ENCODE measurements at regions of chr15 and their contacts with region 1.

Region 1: DNA sequence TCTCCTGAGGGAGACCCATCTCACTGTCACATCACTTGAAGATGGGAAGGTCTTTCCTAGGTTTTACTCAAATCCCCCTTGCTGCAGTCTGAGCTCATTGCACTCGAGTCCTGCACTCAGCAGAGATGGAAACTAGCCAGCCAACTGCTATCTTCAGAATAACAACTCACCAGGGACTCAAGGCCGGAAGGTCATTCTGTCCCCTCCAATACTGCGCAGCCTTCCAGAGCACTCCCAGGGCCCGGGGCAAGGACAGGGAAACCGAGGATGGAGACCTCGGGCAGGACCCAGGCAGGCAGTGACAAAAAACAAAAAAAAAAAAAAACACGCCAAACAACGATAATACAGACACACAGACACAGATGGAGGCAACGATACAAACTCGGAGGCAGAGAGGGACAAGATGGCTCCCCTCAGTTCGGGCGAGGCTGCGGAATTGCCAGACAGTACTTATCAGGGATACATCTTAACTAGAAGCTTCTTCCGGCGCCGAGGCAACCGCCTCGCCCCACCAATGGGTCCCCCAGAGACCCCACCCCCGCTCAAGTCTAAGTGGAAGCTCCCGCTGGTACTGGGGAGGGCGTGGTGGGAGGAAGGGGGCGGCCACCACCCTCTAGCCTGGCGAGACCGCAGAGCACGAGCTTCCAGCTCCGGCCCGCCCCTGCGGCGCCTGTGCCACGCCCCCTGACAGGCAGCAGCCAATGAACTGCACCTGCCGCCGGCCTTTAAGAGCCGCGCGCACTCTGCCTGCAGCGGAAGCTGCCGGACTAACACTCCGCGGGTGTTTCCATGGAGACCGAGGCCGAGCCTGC is 7.0 kb upstream of the MAP1A start:
- DNase-seq: peak; percentile 96
- H3K4me3 ChIP-seq: peak overlapping the region; percentile 73
- H3K27ac ChIP-seq: peak overlapping the region; percentile 81
- H3K27me3 ChIP-seq: no peaks in the 10 kb centered on the region
- CTCF ChIP-seq: peak; percentile 45

Region 2: DNA sequence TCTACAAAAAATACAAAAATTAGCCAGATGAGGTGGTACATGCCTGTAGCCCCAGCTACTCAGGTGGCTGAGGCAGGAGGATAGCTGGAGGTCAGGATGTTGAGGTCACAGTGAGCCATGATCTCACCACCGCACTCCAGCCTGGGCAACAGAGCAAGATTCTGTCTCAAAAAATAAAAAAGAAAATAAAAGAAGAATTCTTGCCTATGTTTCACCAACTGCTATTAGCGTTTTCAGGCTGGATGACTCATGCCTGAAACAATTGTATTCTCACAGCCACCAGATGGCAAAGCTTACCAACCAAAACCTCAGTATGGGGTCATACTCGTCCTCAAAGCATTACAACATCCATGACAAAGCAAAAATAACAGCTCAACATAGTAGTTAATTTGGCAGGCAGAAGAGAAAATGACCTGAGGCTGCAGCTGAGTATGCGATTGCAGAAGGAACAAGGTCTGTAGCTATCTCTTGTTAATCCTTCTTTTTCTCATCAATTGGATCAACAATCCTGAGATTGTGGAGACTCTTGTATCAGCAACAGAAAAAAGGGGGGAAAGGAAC is 69.6 kb before region 1 on chr15:
- CTCF ChIA-PET with region 1: interaction called, 39 read pairs
- POLR2A ChIA-PET with region 1: interaction called, 14 read pairs
- DNase-seq: peak; percentile 93
- H3K4me3 ChIP-seq: no peak overlapping the region
- H3K27ac ChIP-seq: peak overlapping the region; percentile 62
- H3K27me3 ChIP-seq: no peaks in the 10 kb centered on the region
- CTCF ChIP-seq: peak; percentile 58

Region 3: DNA sequence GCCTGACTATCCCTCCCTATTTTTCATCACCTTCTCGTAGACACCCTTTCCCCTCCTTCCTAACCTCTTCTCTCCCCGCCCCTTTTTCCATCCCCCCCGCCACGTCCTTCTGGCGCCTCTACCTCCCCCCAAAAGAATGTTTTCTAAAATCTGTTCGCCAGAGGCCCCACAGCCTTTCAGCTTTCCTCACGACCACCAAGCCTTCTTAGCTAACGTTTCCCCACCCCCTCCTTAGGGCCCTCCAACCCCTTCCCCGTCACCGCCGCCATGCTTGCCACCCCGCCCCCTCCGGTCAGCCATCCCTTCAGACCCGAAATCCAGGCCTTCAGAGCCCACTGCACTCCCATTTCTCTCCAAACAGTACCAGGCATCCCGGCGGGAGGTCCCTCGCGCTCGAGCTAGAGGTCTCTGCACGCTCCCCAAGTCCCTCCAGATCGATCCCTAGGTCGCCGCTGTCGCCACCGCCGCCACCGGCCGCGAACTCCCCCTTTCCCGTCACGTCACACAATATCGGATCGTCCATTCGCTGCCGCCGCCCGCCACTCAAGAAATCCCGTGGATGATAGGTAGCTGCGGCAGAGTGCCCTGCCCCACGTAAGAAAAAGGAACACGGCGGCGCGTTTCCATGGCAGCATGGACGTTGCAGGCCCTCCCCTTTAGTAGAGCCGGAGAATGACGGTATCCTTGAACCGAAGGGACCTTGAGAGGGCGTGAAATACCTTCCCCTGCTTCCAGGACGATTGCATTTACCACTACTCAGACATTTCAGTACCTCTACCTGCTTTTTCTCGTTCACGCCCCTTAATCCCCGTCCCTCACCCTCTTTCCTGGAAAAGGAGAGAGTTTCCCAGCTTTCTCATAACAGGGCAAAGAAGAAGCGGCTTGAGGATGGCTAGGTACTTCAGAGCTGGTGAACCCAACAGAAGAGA is 17.5 kb before region 1 on chr15 and contains the start of gene TP53BP1:
- CTCF ChIA-PET with region 1: interaction called, 11 read pairs
- POLR2A ChIA-PET with region 1: interaction called, 17 read pairs
- DNase-seq: peak; percentile 79
- H3K4me3 ChIP-seq: peak within 1 kb of the TSS; percentile 95
- H3K27ac ChIP-seq: peak within 1 kb of the TSS; percentile 70
- H3K27me3 ChIP-seq: no peaks in the 10 kb centered on the region
- CTCF ChIP-seq: no peak
- polyA plus RNA-seq, gene TP53BP1: 76.6 and 85.6 TPM in 2 replicates